ENCODE measurements at regions of chr11 and their contacts with region 1.

Region 1: DNA sequence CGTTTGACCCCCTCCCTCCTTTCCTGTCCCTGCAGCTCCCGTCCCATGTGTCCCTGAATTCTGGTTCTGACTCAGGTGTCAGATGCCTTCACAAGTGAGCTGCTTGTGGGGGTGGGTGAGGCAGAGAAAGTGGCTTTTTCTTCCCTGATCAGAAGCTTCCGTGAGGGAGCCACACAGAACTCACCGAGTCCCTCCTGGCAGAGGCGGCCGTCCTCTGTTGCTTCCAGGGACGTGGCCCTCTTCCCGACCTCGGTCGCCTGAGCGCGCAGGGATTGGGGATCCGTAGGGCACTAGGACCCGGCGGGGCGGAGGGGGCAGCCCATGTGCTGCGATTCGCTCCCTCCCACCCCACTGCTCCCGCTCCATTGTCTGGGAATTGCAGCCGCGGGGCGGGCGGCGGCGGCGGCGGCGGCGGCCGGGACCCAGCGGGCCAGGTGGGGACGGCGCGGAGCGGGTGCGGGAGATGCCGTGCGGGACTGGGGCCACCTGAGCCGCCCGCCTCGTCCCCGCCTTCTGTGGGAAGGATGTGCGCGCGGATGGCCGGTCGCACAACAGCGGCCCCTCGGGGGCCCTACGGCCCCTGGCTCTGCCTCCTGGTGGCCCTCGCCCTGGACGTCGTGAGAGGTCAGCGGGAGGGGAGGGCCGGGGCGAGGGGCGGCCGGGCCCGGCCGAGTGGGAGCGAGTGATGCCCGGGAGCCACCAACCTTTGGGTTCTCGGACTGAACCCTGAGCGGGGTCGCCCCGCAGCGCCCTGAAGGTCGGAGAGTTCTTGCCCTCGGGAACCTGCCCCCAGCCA is at the start of gene TMEM132A:
- DNase-seq: peak; percentile 47 to 78
- H3K4me3 ChIP-seq: peak within 1 kb of the TSS; percentile 74
- H3K27ac ChIP-seq: no peak within 1 kb of the TSS
- H3K4me1 ChIP-seq: peaks cover 13% of the 10 kb centered on the region
- H3K27me3 ChIP-seq: no peaks in the 10 kb centered on the region
- CTCF ChIP-seq: no peak
- total RNA-seq, gene TMEM132A: 54.4 and 90.3 TPM in 2 replicates

Region 2: GRCh38 chr11:60913793-60914632 is 10.3 kb before region 1 on chr11 and contains the start of gene TMEM109:
- CTCF ChIA-PET with region 1: interaction called, 3 read pairs
- POLR2A ChIA-PET with region 1: no interaction called
- intact Hi-C with region 1: loop called (anchors 1 kb)
- DNase-seq: peak; percentile 81 to 88
- H3K4me3 ChIP-seq: peak within 1 kb of the TSS; percentile 78
- H3K27ac ChIP-seq: peak within 1 kb of the TSS; percentile 62
- H3K4me1 ChIP-seq: peaks cover 36% of the 10 kb centered on the region
- H3K27me3 ChIP-seq: peaks cover 20% of the 10 kb centered on the region; the same call in 1 of the 2 replicates
- CTCF ChIP-seq: no peak
- total RNA-seq, gene TMEM109: 104 and 105 TPM in 2 replicates

Region 3: GRCh38 chr11:60943085-60943484 is 18.8 kb after region 1 on chr11:
- CTCF ChIA-PET with region 1: no interaction called
- POLR2A ChIA-PET with region 1: interaction called, 6 read pairs
- intact Hi-C with region 1: loop called (anchors 2 kb)
- DNase-seq: peak; percentile 86 to 99
- H3K4me3 ChIP-seq: peak overlapping the region; percentile 11; the same call in 1 of the 2 replicates
- H3K27ac ChIP-seq: peak overlapping the region; percentile 74
- H3K4me1 ChIP-seq: peaks cover 26% of the 10 kb centered on the region
- H3K27me3 ChIP-seq: no peaks in the 10 kb centered on the region
- CTCF ChIP-seq: no peak

Region 4: DNA sequence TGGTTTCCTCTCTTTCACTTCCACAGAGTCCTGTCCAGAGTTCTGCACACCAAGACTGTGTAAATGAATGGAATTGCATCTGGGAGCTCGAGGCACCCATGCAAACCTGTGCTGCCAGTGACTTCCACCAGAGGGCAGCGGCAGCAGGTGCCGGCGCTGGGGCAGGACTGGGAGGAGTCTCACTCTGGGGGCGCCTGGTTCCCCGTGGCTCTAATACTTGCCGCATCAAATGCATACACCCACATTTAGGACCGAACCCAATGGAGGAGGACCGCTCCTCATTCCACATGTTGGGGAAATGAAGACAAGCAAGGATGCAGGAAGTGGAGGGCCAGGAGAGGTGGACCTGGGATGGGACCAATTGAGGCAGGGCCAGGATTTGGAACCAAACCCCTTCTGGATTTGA is 46.1 kb after region 1 on chr11:
- CTCF ChIA-PET with region 1: no interaction called
- POLR2A ChIA-PET with region 1: no interaction called
- intact Hi-C with region 1: loop called (anchors 2 kb)
- DNase-seq: peak in 1 of 2 experiments; percentile 69
- H3K4me3 ChIP-seq: no peak overlapping the region
- H3K27ac ChIP-seq: no peak overlapping the region
- H3K4me1 ChIP-seq: no peaks in the 10 kb centered on the region
- H3K27me3 ChIP-seq: peaks cover 14% of the 10 kb centered on the region
- CTCF ChIP-seq: peak; percentile 94

Region 5: DNA sequence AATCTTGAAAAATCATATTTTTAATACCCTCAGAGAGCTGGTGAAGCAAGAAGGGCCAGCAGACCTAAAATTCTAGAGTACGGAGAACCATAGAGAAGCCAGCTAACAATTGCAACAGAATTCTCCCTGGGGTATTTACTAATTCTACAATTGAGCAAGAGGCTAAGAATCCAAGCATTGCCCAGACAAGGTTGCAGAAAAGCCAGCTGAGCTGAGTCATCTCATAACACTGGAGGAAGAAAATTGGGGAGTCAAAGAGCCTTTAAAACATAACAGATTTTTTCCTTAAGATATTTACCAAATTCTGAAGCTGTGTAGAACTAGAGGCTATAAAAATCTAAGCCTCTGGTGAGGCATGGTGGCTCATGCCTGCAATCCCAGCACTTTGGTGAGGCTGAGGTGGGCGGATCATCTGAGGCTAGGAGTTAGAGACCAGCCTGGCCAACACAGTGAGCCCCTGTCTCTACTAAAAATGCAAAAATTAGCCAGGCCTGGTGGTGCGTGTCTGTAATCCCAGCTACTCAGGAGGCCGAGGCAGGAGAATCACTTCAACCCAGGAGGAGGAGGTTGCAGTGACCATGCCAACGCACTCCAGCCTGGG is 454.5 kb after region 1 on chr11:
- CTCF ChIA-PET with region 1: no interaction called
- POLR2A ChIA-PET with region 1: no interaction called
- intact Hi-C with region 1: no loop called
- DNase-seq: peak; percentile 47 to 92
- H3K4me3 ChIP-seq: no peak overlapping the region
- H3K27ac ChIP-seq: peak overlapping the region; percentile 62
- H3K4me1 ChIP-seq: peaks cover 24% of the 10 kb centered on the region
- H3K27me3 ChIP-seq: no peaks in the 10 kb centered on the region
- CTCF ChIP-seq: no peak

Region 6: GRCh38 chr11:61860054-61860903 is 936.0 kb after region 1 on chr11:
- CTCF ChIA-PET with region 1: no interaction called
- POLR2A ChIA-PET with region 1: no interaction called
- intact Hi-C with region 1: loop called (anchors 10 kb)
- DNase-seq: peak in 1 of 2 experiments; percentile 46
- H3K4me3 ChIP-seq: no peak overlapping the region
- H3K27ac ChIP-seq: no peak overlapping the region
- H3K4me1 ChIP-seq: no peaks in the 10 kb centered on the region
- H3K27me3 ChIP-seq: no peaks in the 10 kb centered on the region
- CTCF ChIP-seq: no peak